Activated CD8-positive, alpha-beta T cell treated with anti-CD3 and anti-CD28 coated beads for 36 hours (primary cell): ENCODE measurements at regions of chr1 and their contacts with region 1.

Region 1: GRCh38 chr1:37682334-37682987 is 9.9 kb upstream of the CDCA8 start:
- DNase-seq: peak; percentile 90
- ATAC-seq: peak; percentile 80
- H3K4me3 Mint-ChIP-seq: no peak overlapping the region
- H3K27ac Mint-ChIP-seq: peak overlapping the region; percentile 63
- H3K4me1 Mint-ChIP-seq: peaks cover 8% of the 10 kb centered on the region
- H3K27me3 Mint-ChIP-seq: no peaks in the 10 kb centered on the region
- CTCF ChIP-seq: peak; percentile 90

Region 2: DNA sequence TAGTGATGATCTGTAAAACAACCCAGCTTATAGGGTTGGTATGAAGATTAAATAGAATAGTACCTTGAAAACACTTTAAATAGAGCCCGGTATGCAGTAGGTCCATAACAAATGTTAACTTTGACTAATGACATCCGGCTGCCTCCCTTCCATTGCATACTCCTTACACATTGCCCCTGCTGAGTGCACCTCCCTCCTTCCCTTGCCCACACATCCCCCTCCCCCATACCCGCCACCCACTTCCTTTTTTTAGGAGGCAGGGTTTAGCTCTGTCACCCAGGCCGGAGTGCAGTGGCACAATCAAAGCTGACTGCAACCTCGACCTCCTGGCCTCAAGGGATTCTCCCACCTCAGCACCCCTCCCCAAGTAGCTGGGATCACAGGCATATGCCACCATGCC is 232.5 kb before region 1 on chr1:
- CTCF ChIA-PET with region 1: interaction called, 25 read pairs
- POLR2A ChIA-PET with region 1: interaction called, 3 read pairs
- intact Hi-C with region 1: no loop called
- DNase-seq: peak; percentile 69
- ATAC-seq: peak; percentile 73
- H3K4me3 Mint-ChIP-seq: no peak overlapping the region
- H3K27ac Mint-ChIP-seq: peak overlapping the region; percentile 5
- H3K4me1 Mint-ChIP-seq: peaks cover 11% of the 10 kb centered on the region
- H3K27me3 Mint-ChIP-seq: no peaks in the 10 kb centered on the region
- CTCF ChIP-seq: no peak

Region 3: GRCh38 chr1:37553927-37554808 is 128.3 kb before region 1 on chr1 and contains the start of gene SNIP1:
- CTCF ChIA-PET with region 1: interaction called, 17 read pairs
- POLR2A ChIA-PET with region 1: interaction called, 3 read pairs
- intact Hi-C with region 1: loop called (anchors 5 kb)
- DNase-seq: peak; percentile 94
- ATAC-seq: peak; percentile 92
- H3K4me3 Mint-ChIP-seq: peak within 1 kb of the TSS; percentile 85
- H3K27ac Mint-ChIP-seq: peak within 1 kb of the TSS; percentile 91
- H3K4me1 Mint-ChIP-seq: peaks cover 42% of the 10 kb centered on the region
- H3K27me3 Mint-ChIP-seq: peaks cover 2% of the 10 kb centered on the region
- CTCF ChIP-seq: no peak
- total RNA-seq, gene SNIP1: 18.3 to 21.8 TPM

Region 4: GRCh38 chr1:37561133-37562132 is 121.0 kb before region 1 on chr1:
- CTCF ChIA-PET with region 1: interaction called, 14 read pairs
- POLR2A ChIA-PET with region 1: no interaction called
- intact Hi-C with region 1: loop called (anchors 5 kb)
- DNase-seq: peak; percentile 54
- ATAC-seq: peak; percentile 69
- H3K4me3 Mint-ChIP-seq: no peak overlapping the region
- H3K27ac Mint-ChIP-seq: no peak overlapping the region
- H3K4me1 Mint-ChIP-seq: peaks cover 2% of the 10 kb centered on the region
- H3K27me3 Mint-ChIP-seq: no peaks in the 10 kb centered on the region
- CTCF ChIP-seq: peak; percentile 65

Region 5: DNA sequence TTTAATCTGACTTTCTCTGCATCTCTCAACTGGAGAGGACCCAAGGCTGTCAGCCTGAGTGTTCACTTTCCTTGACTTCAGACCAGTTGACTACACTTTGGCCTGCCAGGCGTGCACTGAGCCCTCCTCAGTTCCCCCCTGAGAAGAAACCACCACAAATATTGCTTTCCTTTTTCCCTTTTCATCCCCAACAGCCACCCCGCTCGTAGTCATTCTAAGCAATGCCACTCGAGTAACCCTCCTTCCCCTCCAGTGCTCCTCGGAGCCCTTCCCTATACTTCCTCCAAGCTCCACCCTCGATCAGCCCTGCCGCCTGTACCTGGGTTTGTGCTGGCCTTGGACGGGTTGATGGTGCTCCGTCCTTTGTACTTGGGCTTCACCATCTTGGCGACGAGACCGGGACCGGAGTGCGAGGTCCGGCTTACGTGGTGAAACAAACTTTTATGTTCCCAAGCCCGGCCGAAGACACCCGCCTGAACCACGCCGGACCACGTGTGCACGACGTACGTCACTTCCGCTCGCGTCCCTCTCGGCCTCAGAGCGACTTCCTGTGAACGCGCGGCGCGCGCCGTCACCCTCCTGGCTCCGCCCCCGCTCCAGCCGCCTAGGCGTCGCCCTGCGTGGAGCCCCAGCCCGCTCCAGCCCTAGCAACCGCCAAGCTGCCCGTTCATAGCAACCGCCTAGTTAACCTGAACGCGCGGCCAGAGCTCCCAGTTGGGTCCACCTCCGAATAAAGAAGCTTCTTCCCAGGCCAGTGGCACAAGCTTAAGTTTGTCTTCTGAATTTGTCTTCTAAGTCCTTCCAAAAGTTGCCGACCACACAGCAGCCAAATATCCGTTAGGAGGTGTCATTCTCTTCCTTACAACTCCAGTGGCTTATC is 86.8 kb before region 1 on chr1 and contains the start of gene GNL2:
- CTCF ChIA-PET with region 1: interaction called, 272 read pairs
- POLR2A ChIA-PET with region 1: interaction called, 3 read pairs
- intact Hi-C with region 1: no loop called
- DNase-seq: peak; percentile 98
- ATAC-seq: peak; percentile 98
- H3K4me3 Mint-ChIP-seq: peak within 1 kb of the TSS; percentile 97
- H3K27ac Mint-ChIP-seq: peak within 1 kb of the TSS; percentile 95
- H3K4me1 Mint-ChIP-seq: peaks cover 23% of the 10 kb centered on the region
- H3K27me3 Mint-ChIP-seq: no peaks in the 10 kb centered on the region
- CTCF ChIP-seq: no peak
- total RNA-seq, gene GNL2: 76.4 to 77.8 TPM

Region 6: DNA sequence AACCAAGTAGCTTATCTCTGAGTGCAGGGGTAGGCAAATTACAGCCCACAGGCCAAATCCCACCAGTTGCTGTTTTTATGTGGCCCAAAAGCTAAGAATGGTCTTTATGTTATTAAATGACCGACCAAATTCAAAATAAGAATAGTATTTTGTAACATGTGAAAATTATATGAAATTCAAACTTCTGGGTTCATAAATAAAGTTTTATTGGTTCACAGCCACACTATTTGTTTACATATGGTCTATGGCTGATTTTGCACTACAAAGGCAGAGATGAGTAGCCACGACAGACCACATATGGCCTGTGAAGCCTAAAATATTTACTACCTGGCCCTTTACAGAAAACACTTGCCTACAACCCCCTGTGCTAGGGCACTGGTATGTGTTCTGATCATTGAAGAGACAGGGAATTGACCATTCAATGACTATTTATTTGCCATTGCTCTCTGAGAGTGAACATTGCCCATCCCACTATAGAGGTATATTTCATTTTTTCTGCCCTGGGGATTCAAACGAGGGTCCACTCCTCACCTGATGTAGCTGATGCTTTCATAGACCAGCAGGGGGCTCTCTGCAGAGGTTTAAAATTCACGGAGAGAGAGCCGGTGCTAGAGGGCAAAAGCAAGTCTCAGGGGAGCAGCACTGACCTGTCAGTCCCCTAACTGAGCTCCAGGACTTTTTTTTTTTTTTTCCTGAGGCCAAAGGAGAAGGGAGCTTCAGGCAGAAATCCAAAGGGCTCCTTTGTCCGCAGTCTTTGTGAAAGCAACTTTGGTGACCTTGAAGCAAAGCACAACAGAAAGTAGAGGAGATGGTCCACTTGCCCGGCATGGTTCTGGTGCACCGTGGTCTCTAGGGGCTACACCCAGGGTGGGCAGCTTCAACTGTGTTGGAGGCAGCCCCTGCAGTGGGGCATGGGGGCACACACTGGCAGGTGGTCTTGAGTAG is 79.4 kb before region 1 on chr1:
- CTCF ChIA-PET with region 1: interaction called, 272 read pairs
- POLR2A ChIA-PET with region 1: interaction called, 4 read pairs
- intact Hi-C with region 1: loop called (anchors 2 kb)
- DNase-seq: peak; percentile 34
- ATAC-seq: peak; percentile 77
- H3K4me3 Mint-ChIP-seq: no peak overlapping the region
- H3K27ac Mint-ChIP-seq: no peak overlapping the region
- H3K4me1 Mint-ChIP-seq: no peaks in the 10 kb centered on the region
- H3K27me3 Mint-ChIP-seq: peaks cover 11% of the 10 kb centered on the region
- CTCF ChIP-seq: peak; percentile 80

Region 7: DNA sequence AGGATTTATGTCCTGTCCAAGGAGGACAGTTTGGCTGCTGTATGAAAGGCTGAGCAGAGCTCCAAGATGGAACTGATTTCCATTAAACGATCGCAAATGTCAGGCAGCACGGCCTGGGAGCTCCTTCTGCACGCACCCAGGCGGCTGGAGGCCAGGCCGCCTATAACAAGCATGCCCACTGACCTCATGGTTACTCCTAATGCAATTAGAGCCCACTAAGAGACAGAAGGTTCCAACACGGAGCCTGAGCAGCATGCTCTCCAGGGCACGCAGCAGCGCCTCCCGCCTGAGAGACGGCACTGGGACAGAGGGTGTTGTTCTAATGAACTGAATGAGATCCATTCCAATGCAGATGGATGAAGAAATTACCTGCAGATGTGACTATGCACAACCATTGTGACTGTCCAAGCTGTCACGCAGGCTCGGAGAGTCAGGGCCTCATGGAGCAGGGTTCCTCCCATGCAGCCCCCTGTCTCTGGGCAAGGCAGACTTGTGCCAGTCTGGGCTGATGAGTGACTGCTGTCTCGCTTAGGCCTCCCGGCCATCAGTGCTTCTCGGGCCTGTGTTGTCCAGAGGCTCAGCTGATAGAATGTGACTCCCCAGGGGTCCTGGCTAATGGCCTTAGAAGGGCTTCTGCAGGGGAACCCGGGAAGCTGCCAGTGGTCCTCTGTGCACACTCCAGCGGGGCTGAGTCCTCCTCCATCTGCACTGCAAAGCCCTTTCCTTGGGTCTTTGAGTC is 15.3 kb before region 1 on chr1:
- CTCF ChIA-PET with region 1: interaction called, 12 read pairs
- POLR2A ChIA-PET with region 1: no interaction called
- intact Hi-C with region 1: no loop called
- DNase-seq: no peak
- ATAC-seq: no peak
- H3K4me3 Mint-ChIP-seq: no peak overlapping the region
- H3K27ac Mint-ChIP-seq: no peak overlapping the region
- H3K4me1 Mint-ChIP-seq: no peaks in the 10 kb centered on the region
- H3K27me3 Mint-ChIP-seq: peaks cover 8% of the 10 kb centered on the region
- CTCF ChIP-seq: no peak

Region 8: DNA sequence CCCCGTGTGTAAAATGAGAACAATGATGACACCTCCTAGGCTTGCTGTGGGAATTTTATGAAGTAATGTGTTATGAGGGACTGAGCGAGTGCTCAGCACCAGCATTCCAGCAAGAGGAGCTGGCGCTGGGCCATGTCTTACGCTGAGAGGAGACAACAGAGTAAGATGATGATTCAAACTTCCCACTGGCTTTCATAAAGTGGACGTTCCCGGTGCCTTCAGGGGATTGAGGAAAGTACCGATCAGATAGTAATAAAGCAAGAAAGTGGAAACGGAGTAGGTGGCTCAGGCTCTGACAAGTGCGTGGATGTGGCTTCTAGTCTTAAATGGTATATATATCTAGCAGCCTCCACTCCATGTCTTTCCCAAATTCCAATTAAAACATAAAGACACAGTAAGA is 58.7 kb after region 1 on chr1:
- CTCF ChIA-PET with region 1: no interaction called
- POLR2A ChIA-PET with region 1: no interaction called
- intact Hi-C with region 1: no loop called
- DNase-seq: no peak
- ATAC-seq: no peak
- H3K4me3 Mint-ChIP-seq: no peak overlapping the region
- H3K27ac Mint-ChIP-seq: no peak overlapping the region
- H3K4me1 Mint-ChIP-seq: no peaks in the 10 kb centered on the region
- H3K27me3 Mint-ChIP-seq: peaks cover 31% of the 10 kb centered on the region
- CTCF ChIP-seq: no peak